ENCODE measurements at regions of chr20 and their contacts with region 1.

Region 1: DNA sequence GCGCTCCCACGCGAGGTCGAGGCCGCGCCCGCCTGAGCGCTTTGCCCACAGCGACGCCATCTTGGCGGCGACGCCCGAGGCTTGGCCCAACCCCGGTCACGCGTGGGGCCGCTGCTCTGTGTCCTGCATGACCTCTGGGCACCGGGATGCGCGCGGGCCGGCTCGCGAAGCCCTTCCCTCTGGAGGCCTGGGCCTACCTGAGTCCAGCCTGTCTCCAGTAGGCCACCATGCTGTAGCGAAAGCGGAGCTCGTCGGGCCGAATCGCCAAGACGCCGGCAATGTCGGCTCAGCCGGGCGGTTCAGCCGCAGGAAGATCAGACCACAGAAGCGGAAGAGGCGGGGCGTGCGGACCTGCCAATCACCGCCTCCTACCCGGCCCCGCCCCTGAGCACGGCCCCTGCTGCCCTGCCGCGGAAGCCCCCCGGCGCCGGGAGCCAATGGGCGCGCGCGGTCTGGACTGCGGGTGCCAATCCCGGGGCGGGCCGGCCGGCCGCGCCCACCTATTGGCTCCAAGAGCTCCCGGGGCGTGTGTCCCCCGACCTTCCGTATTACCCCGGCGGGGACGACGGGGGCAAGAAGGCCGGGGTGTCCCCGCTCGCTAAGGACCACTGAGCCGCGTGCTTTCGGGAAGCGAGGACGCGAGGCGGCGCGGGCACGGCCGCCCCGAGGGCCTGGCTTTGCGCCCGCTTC is at the start of gene ATP5F1E:
- DNase-seq: peak; percentile 98
- ATAC-seq: peak; percentile 95
- H3K4me3 Mint-ChIP-seq: peak within 1 kb of the TSS; percentile 87
- H3K27ac Mint-ChIP-seq: peak within 1 kb of the TSS; percentile 96
- H3K4me1 Mint-ChIP-seq: peaks cover 73% of the 10 kb centered on the region
- H3K27me3 Mint-ChIP-seq: no peaks in the 10 kb centered on the region
- total RNA-seq, gene ATP5F1E: 63.5 to 76.1 TPM

Region 2: DNA sequence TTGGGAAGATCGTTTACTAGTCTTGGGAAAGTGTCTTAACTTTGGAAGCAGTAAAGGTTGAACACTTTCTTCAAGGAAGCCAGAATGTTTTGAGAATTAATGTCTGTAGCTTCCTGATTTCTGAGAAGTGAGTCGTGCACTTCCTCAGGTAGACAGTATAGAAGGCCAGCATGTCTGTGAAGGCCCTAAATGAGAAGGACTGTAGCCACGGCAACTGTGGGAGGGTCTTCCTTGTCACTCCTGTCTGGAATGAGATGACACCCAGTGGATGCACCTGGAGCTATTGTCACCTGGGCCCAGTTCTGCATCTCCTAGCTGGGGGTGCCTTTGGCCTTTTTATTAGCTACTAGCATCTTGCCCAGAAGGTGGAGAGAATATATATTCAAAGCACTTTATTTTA is 372.3 kb before region 1 on chr20:
- CTCF ChIA-PET with region 1: no interaction called
- POLR2A ChIA-PET with region 1: no interaction called
- intact Hi-C with region 1: loop called in 1 of 2 experiments (anchors 2 kb)
- DNase-seq: peak; percentile 38
- ATAC-seq: peak; percentile 33
- H3K4me3 Mint-ChIP-seq: peak overlapping the region; percentile 55
- H3K27ac Mint-ChIP-seq: peak overlapping the region; percentile 91
- H3K4me1 Mint-ChIP-seq: peaks cover 84% of the 10 kb centered on the region
- H3K27me3 Mint-ChIP-seq: no peaks in the 10 kb centered on the region

Region 3: GRCh38 chr20:59006864-59007664 is 25.1 kb before region 1 on chr20 and contains the start of gene CTSZ:
- CTCF ChIA-PET with region 1: interaction called, 3 read pairs
- POLR2A ChIA-PET with region 1: interaction called, 7 read pairs
- intact Hi-C with region 1: loop called in 1 of 2 experiments (anchors 1 kb)
- DNase-seq: peak; percentile 70
- ATAC-seq: peak; percentile 68
- H3K4me3 Mint-ChIP-seq: peak within 1 kb of the TSS; percentile 69
- H3K27ac Mint-ChIP-seq: peak within 1 kb of the TSS; percentile 69
- H3K4me1 Mint-ChIP-seq: peaks cover 34% of the 10 kb centered on the region
- H3K27me3 Mint-ChIP-seq: no peaks in the 10 kb centered on the region
- total RNA-seq, gene CTSZ: 26.6 to 29.4 TPM

Region 4: DNA sequence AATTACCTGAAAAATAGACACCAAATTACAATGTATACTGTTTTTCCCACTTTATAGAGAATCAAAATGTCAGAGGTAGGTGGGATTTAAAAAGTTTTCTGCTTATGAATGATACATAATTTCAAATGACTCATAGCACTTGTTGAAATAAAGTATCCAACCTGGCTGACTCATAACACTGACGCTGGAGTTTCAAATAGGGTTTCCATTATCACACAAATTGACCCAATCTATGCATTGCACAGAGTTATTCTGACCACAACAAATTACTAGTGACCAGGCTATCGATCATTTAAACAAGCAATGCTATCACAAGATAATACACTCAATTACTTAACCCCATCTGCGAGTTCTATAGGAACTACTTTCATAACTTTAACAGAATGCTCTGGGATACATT is 42.3 kb after region 1 on chr20:
- CTCF ChIA-PET with region 1: no interaction called
- POLR2A ChIA-PET with region 1: no interaction called
- intact Hi-C with region 1: loop called (anchors 1 to 5 kb)
- DNase-seq: peak; percentile 31
- ATAC-seq: peak; percentile 79
- H3K4me3 Mint-ChIP-seq: no peak overlapping the region
- H3K27ac Mint-ChIP-seq: no peak overlapping the region
- H3K4me1 Mint-ChIP-seq: peaks cover 52% of the 10 kb centered on the region
- H3K27me3 Mint-ChIP-seq: peaks cover 18% of the 10 kb centered on the region

Region 5: GRCh38 chr20:59104831-59105230 is 72.7 kb after region 1 on chr20:
- CTCF ChIA-PET with region 1: no interaction called
- POLR2A ChIA-PET with region 1: no interaction called
- intact Hi-C with region 1: no loop called
- DNase-seq: no peak
- ATAC-seq: no peak
- H3K4me3 Mint-ChIP-seq: no peak overlapping the region
- H3K27ac Mint-ChIP-seq: no peak overlapping the region
- H3K4me1 Mint-ChIP-seq: peaks cover 12% of the 10 kb centered on the region
- H3K27me3 Mint-ChIP-seq: no peaks in the 10 kb centered on the region

Region 6: GRCh38 chr20:59165891-59166709 is 133.9 kb after region 1 on chr20:
- CTCF ChIA-PET with region 1: no interaction called
- POLR2A ChIA-PET with region 1: interaction called, 3 read pairs
- intact Hi-C with region 1: loop called in 1 of 2 experiments (anchors 5 kb)
- DNase-seq: peak; percentile 62
- ATAC-seq: peak; percentile 69
- H3K4me3 Mint-ChIP-seq: peak overlapping the region; percentile 76
- H3K27ac Mint-ChIP-seq: peak overlapping the region; percentile 94
- H3K4me1 Mint-ChIP-seq: peaks cover 89% of the 10 kb centered on the region
- H3K27me3 Mint-ChIP-seq: no peaks in the 10 kb centered on the region

Region 7: GRCh38 chr20:59403261-59403961 is 371.2 kb after region 1 on chr20:
- CTCF ChIA-PET with region 1: no interaction called
- POLR2A ChIA-PET with region 1: no interaction called
- intact Hi-C with region 1: loop called in 1 of 2 experiments (anchors 1 kb)
- DNase-seq: peak; percentile 89
- ATAC-seq: peak; percentile 72
- H3K4me3 Mint-ChIP-seq: no peak overlapping the region
- H3K27ac Mint-ChIP-seq: peak overlapping the region; percentile 71
- H3K4me1 Mint-ChIP-seq: no peaks in the 10 kb centered on the region
- H3K27me3 Mint-ChIP-seq: peaks cover 2% of the 10 kb centered on the region

Measured in activated CD4-positive, alpha-beta T cell treated with anti-CD3 and anti-CD28 coated beads for 36 hours (primary cell).